ENCODE measurements at regions of chr11 and their contacts with region 1.

Region 1: DNA sequence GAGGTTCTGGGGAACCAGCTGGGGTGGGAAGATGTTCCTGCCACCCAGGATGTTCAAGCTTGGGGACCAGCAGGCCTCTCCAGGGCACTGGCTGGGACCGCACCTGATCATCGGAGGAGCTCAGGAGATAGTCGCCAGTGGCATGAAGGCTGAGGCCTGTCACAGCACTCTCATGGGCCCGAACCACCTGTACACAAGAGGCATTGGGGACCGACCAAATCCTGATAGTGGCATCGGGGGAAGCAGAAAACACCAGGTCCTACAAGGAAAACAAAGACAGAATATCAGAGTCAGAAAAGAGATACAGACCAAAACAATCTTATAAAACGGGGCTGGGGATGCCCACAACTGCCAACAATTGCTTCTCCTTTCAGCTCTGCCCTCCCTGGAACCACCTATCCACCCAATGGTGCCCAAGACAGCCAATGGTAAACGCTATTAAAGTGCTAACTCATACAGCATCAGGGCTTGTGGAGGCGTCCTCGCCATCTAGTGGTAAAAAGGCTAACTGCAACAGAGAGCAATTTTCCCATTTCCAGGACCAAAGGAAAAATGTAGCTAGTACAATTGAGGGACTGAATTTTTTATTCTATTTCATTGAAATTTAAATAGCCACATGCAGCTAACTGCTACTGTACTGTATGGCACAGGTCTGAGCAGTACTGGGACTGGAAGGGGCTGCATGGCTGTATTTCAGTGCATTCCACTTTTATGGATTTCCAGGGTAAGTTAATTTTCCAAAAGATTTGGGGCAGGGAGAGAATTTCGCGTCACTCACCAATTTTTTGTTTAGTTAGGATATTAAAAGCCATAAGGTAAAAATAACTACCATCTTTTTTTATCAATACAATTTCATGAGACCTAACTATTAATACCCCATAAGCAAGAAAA is 7.1 kb downstream of the PRPF19 start:
- DNase-seq: no peak
- H3K4me3 ChIP-seq: no peak overlapping the region
- H3K27ac ChIP-seq: no peak overlapping the region
- H3K4me1 ChIP-seq: peaks cover 11% of the 10 kb centered on the region
- H3K27me3 ChIP-seq: no peaks in the 10 kb centered on the region
- CTCF ChIP-seq: peak; percentile 64 to 88 (median 84)
- POLR2A ChIP-seq: no peak

Region 2: GRCh38 chr11:60831501-60832079 is 67.7 kb before region 1 on chr11:
- intact Hi-C with region 1: loop called (anchors 2 kb)
- DNase-seq: no peak
- H3K4me3 ChIP-seq: no peak overlapping the region
- H3K27ac ChIP-seq: no peak overlapping the region
- H3K4me1 ChIP-seq: no peaks in the 10 kb centered on the region
- H3K27me3 ChIP-seq: no peaks in the 10 kb centered on the region
- CTCF ChIP-seq: no peak
- POLR2A ChIP-seq: no peak

Measured in vagina (tissue), 2 donors.